BJ (cell line): ENCODE measurements at regions of chr18 and their contacts with region 1.

Region 1: DNA sequence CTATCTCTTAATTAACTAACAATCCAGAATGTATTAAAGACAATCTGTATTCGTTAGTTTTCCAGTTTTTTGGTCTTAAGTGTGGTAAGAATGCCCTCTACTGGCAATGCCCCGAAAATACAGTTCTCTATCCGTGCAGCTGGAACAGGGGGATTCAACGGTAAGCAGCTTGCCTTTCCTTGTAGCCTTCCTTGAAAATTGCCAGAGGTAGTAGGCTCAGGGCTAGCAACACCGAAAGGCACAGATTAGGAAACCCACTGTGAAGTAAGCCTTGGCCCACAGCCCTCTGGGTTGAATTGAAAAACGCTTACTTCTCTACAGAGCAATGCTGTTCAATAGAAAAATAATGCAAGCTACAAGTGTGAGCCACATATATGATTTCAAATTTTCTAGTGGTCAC is 17.1 kb upstream of the VPS4B start:
- DNase-seq: no peak
- H3K4me3 ChIP-seq: no peak overlapping the region
- H3K27me3 ChIP-seq: peaks cover 2% of the 10 kb centered on the region; the same call in 1 of the 2 replicates
- CTCF ChIP-seq: peak; percentile 79

Region 2: DNA sequence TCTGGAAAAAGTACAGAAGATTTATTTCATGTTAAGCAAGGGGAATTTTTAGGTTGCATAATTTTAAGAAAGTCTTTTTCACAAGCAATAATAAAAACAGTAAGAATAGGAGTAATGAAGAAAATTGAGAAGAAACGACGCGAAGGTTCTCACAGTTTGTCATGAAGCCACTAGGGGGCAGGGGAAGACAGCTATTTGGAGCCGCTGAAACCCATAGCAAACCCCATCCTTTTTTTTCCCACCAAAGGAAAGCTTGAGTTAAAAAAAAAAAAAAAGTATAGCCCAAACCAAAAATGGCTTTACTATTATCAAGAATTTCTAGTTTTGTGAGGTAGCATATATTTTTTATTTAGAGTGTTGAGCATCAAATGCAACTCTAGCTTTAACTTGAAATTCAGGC is 423.1 kb before region 1 on chr18:
- CTCF ChIA-PET with region 1: interaction called, 44 read pairs
- POLR2A ChIA-PET with region 1: no interaction called
- DNase-seq: peak; percentile 7
- H3K4me3 ChIP-seq: no peak overlapping the region
- H3K27me3 ChIP-seq: peaks cover 8% of the 10 kb centered on the region
- CTCF ChIP-seq: peak; percentile 80

Region 3: DNA sequence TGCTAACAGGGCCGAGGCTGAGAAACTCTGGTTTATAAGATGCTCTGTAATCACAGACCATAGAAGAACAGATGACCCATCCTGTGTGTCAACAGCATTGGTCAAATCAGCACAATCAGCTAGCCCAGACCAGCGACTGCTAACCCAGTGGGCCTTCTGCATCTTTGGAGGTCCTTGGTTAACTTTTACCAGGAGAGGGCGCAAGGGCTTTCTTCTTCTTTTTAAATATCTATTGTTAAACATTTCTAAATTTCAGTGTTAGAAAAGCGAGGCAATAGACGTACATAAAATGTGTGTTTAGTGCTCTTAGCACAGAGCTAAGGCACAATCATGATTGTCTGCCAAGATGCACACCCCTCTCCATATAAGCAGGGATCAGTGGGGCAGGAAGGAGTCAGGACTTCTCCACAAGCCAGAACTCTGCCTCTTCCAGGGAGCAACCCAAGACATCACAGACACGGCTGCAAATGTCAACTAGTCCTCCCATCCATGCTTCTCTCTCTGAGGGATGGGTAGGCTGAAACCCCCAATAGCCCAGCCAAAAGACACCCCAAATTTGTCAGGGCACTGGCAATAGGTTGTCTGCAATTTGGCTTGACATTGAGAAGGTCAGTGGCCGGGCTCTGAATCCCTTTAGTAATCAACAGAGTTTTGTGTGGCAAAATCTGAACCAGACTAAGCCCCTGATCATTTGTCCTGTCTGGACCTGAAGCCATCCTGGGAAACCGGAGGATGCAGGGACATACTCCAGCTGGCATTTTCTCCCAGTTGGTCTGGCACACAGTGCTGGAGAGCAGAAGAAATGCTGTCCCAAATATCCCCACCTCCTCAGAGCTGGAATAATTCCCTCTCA is 308.0 kb before region 1 on chr18:
- CTCF ChIA-PET with region 1: interaction called, 34 read pairs
- POLR2A ChIA-PET with region 1: no interaction called
- DNase-seq: peak; percentile 3
- H3K4me3 ChIP-seq: no peak overlapping the region
- H3K27me3 ChIP-seq: peaks cover 7% of the 10 kb centered on the region; the same call in 1 of the 2 replicates
- CTCF ChIP-seq: peak; percentile 67

Region 4: DNA sequence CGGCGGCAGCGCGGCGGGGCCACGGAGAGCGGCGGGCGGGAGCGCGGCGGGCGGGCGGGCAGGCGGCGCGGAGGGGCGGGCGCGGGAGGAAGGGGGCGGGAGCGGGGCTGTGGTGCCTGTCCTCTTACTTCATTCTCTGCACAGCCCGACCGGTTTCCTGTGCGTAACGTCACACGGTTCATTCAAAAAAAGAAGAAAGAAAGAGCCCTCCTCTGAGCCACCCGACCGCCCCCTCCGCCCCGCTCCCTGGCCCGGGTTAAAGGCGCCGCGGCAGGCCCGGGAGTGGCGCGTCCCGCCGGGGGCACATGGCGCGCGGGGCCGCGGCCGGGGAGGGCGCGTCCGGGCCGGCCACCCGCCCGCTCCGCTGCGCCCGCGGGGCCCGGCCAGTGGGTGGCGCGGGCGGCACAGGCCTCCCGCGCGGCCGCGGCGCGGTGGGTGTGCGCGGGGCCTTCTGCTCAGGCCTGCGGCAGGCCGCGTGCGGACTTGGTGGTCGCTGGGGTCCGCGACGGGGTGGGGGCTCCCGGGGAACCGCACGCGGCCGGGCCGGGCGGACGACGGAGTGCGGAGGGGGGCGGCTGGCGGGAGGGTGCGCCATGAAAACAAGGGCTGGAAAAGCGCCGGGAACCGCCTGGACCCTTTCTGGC is 119.2 kb before region 1 on chr18:
- CTCF ChIA-PET with region 1: interaction called, 16 read pairs
- POLR2A ChIA-PET with region 1: no interaction called
- DNase-seq: no peak
- H3K4me3 ChIP-seq: peak overlapping the region; percentile 33
- H3K27me3 ChIP-seq: peaks cover 12% of the 10 kb centered on the region
- CTCF ChIP-seq: no peak

Region 5: GRCh38 chr18:63339920-63340484 is 99.3 kb before region 1 on chr18:
- CTCF ChIA-PET with region 1: interaction called, 11 read pairs
- POLR2A ChIA-PET with region 1: no interaction called
- DNase-seq: no peak
- H3K4me3 ChIP-seq: no peak overlapping the region
- H3K27me3 ChIP-seq: no peaks in the 10 kb centered on the region
- CTCF ChIP-seq: peak; percentile 60

Region 6: GRCh38 chr18:63427558-63427957 is 11.8 kb before region 1 on chr18:
- CTCF ChIA-PET with region 1: interaction called, 38 read pairs
- POLR2A ChIA-PET with region 1: no interaction called
- DNase-seq: no peak
- H3K4me3 ChIP-seq: no peak overlapping the region
- H3K27me3 ChIP-seq: no peaks in the 10 kb centered on the region
- CTCF ChIP-seq: no peak

Region 7: DNA sequence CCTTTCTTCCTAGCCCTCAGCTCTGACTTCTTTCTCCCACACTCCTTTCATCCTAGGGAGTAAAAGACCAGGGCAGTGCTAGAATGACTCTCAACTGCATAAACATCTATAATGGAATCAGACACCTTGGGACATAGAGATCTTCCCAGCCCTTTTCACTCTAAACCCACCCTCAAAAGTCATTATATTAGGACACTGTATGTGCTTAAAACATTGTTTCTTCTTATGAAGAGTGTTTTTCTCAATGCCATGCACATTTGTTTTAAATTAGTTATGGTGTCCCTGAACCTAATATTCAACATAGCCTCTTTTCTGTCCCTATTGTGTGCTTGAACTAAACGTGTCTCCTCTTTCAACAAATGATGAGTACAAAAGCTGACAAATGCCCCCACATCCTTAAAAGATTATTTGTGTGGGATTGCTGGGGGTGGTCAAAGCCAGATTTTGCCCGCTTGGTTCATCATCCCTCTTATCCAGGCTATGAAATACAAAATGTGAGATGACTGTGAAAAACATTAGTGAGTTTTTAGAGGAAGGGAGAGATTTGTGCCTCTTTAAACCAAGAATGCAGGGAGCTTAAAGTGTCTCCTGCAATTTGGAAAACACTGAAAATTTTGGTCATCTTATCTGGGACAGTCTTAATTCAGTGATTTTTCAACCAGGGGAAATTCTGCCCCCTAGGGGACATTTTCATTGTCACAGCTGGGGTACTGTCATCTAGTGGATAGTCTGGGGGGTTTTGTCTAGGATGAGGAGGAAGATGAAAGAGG is 66.4 kb after region 1 on chr18:
- CTCF ChIA-PET with region 1: interaction called, 25 read pairs
- POLR2A ChIA-PET with region 1: no interaction called
- DNase-seq: no peak
- H3K4me3 ChIP-seq: no peak overlapping the region
- H3K27me3 ChIP-seq: no peaks in the 10 kb centered on the region; the same call in 1 of the 2 replicates
- CTCF ChIP-seq: peak; percentile 67